RWPE1 (cell line): ENCODE measurements at regions of chr2 and their contacts with region 1.

Region 1: GRCh38 chr2:158072361-158072760 is 29.3 kb upstream of the UPP2 start:
- DNase-seq: no peak
- H3K27ac ChIP-seq: no peak overlapping the region
- CTCF ChIP-seq: no peak

Region 2: GRCh38 chr2:158174495-158174894 is 102.1 kb after region 1 on chr2:
- CTCF ChIA-PET with region 1: no interaction called
- POLR2A ChIA-PET with region 1: interaction called, 10 read pairs
- DNase-seq: no peak
- H3K27ac ChIP-seq: no peak overlapping the region
- CTCF ChIP-seq: no peak